Calu3 (cell line): ENCODE measurements at regions of chr17 and their contacts with region 1.

Region 1: GRCh38 chr17:38982858-38983746 is 15.9 kb upstream of the FBXO47 start:
- DNase-seq: peak; percentile 85
- H3K4me3 Mint-ChIP-seq: no peak overlapping the region
- H3K27ac Mint-ChIP-seq: no peak overlapping the region
- H3K4me1 Mint-ChIP-seq: no peaks in the 10 kb centered on the region
- H3K27me3 Mint-ChIP-seq: peaks cover 44% of the 10 kb centered on the region
- CTCF ChIP-seq: peak; percentile 98

Region 2: GRCh38 chr17:37047631-37048104 is 1935.4 kb before region 1 on chr17:
- CTCF ChIA-PET with region 1: interaction called, 104 read pairs
- intact Hi-C with region 1: loop called (anchors 1 kb)
- DNase-seq: peak; percentile 95
- H3K4me3 Mint-ChIP-seq: no peak overlapping the region
- H3K27ac Mint-ChIP-seq: no peak overlapping the region
- H3K4me1 Mint-ChIP-seq: peaks cover 7% of the 10 kb centered on the region
- H3K27me3 Mint-ChIP-seq: no peaks in the 10 kb centered on the region
- CTCF ChIP-seq: peak; percentile 100

Region 3: DNA sequence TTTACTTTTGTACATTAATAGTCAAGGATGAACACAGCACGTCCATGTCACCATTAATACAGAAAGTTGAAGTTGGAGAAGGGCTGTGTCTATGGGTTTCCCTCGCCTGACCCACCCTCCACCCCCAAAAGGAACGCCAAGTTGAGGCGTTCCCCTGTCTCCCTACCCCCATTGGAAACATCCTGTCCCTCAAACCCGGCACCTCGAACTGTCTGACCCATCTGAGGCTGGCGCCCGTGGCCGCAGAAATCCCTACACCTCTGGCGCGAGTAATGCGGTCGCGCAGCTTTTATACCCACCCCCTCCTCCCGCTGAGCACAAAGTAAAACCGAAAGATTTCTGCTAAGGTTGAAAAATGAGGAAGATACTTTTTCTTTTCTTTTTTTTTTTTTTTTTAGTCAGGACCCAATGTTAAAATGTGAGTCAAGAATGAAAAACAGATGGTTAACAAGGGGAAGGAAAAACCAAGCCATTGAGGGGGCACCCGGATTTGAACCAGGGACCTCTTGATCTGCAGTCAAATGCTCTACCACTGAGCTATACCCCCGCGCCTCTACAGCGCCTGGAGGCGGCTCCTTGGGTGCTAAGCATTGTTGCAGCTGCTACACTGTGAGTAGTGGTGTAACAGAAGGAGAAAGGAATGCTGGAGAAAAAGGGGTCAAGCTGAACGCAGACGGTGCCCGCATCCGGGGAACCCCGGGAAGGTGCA is 114.1 kb before region 1 on chr17:
- CTCF ChIA-PET with region 1: interaction called, 30 read pairs
- intact Hi-C with region 1: no loop called
- DNase-seq: peak; percentile 100
- H3K4me3 Mint-ChIP-seq: peak overlapping the region; percentile 95
- H3K27ac Mint-ChIP-seq: peak overlapping the region; percentile 97
- H3K4me1 Mint-ChIP-seq: peaks cover 51% of the 10 kb centered on the region
- H3K27me3 Mint-ChIP-seq: no peaks in the 10 kb centered on the region
- CTCF ChIP-seq: no peak

Region 4: DNA sequence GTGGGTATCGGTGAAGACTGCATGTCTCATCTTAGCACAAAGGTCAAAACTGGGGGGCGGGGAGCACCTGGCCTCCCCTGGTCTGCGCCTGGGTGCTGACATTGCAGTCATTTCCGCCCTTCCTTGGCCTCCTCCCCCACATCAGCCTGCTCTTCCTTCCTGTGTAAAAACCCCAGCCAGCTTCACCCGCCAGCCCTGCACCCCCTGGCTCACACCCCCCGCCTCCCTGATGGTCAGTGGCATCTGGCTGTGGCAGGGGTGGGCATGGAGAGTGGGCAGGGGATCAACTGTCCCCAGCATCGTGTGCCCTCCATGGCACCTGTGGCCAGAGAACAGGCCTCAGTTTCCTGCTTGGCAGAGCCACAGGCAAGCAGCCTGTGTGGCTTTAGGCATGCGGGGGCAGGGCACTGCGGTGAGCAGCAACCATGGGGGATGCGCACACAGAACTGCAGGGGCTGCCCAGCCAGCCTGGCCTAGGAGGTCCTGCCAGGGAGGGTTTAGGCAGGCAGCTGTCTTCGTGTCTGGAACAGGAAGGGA is 84.2 kb before region 1 on chr17:
- CTCF ChIA-PET with region 1: no interaction called
- intact Hi-C with region 1: no loop called
- DNase-seq: no peak
- H3K4me3 Mint-ChIP-seq: no peak overlapping the region
- H3K27ac Mint-ChIP-seq: no peak overlapping the region
- H3K4me1 Mint-ChIP-seq: peaks cover 24% of the 10 kb centered on the region
- H3K27me3 Mint-ChIP-seq: no peaks in the 10 kb centered on the region
- CTCF ChIP-seq: no peak

Region 5: GRCh38 chr17:39014044-39014794 is 31.1 kb after region 1 on chr17:
- CTCF ChIA-PET with region 1: interaction called, 17 read pairs
- intact Hi-C with region 1: no loop called
- DNase-seq: peak; percentile 49
- H3K4me3 Mint-ChIP-seq: no peak overlapping the region
- H3K27ac Mint-ChIP-seq: peak overlapping the region; percentile 0
- H3K4me1 Mint-ChIP-seq: peaks cover 26% of the 10 kb centered on the region
- H3K27me3 Mint-ChIP-seq: peaks cover 11% of the 10 kb centered on the region
- CTCF ChIP-seq: no peak

Region 6: DNA sequence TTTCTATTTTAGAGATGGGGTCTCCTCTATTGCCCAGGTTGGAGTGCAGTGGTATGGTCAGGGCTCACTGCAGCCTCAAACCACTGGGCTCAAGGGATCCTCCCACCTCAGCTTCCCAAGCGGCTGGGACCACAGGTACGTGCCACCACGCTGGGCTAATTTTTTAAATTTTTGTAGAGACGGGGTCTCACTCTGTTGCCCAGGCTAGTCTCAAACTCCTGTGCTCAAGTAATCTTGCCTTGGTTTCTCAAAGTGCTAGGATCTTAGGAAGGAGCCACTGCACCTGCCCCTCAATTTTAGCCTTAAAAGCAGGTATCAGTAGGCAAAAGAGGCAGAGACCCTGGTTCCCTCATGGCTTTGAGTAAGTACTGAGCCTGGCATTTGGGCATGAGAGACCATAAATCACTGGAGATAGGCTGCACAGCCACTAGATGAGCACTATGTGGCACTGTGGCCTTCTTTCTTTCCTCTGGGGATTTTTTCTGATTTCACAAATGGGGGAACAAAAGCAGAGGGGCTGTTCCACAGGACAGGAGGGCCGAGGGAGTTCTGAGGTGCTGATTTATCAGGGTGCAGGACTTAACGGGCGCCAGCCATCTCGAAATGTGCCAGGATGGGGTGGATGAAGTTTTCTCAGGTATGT is 86.1 kb after region 1 on chr17:
- CTCF ChIA-PET with region 1: interaction called, 13 read pairs
- intact Hi-C with region 1: no loop called
- DNase-seq: peak; percentile 67
- H3K4me3 Mint-ChIP-seq: no peak overlapping the region
- H3K27ac Mint-ChIP-seq: no peak overlapping the region
- H3K4me1 Mint-ChIP-seq: peaks cover 7% of the 10 kb centered on the region
- H3K27me3 Mint-ChIP-seq: peaks cover 89% of the 10 kb centered on the region
- CTCF ChIP-seq: peak; percentile 92

Region 7: DNA sequence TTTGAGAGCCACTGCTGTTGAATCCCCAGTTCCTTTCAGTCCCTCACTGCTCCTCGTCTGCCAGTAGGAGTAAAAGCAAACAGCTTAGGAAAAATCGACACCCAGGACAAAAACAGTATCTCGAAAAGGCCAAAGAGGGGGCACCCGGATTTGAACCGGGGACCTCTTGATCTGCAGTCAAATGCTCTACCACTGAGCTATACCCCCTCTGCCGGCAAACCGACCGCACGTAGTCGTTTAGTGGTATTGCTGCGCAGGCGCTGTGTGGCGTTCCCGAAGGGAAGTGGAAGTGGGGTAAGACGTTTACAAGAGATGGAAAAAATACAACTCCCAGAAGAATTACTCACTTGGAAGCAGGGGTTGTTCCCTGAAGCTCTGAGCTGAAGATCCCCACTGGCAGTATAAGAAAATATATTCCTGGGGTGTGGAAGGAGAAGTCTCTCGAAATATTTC is 170.5 kb after region 1 on chr17:
- CTCF ChIA-PET with region 1: interaction called, 502 read pairs
- intact Hi-C with region 1: loop called (anchors 1 kb)
- DNase-seq: peak; percentile 100
- H3K4me3 Mint-ChIP-seq: peak overlapping the region; percentile 95
- H3K27ac Mint-ChIP-seq: peak overlapping the region; percentile 99
- H3K4me1 Mint-ChIP-seq: peaks cover 29% of the 10 kb centered on the region
- H3K27me3 Mint-ChIP-seq: peaks cover 89% of the 10 kb centered on the region
- CTCF ChIP-seq: peak; percentile 28

Region 8: DNA sequence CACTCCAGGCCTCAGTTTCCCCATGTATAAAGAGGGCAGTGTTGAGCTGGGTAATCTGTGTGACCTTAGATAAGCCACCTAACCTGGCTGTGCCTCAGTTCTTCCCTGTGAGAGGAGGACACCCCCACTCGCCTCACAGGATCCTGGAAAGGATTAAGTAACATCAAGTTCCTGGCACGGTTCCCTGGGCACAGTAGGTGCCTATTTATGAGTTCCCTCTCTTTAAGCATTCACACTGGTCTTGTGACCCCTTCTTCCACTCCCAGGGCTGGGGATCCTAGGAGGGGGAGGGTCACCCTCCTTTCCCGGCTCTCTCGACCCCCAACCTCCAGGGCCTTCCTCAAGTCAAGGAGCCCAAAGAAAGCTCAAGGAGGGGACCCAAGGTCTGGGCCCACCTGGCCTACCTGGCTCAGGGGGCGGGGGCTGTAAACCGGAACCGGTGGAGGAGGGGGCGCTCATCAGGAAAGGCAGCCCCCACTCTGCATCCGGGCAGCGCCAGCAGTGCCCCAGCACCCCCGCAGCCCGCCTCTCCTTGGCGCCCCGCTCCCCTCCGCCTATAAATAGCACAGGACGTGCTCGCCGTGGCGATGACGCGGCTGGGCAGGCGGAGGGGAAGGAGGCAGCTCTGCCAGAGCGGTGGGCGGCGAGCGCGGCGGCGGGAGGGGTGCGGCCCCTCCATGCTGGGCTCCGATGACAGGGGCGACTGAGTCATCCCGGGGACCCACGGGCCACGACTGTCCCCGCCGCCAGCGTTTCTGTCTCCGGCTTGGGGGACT is 226.4 kb after region 1 on chr17:
- CTCF ChIA-PET with region 1: interaction called, 10 read pairs
- intact Hi-C with region 1: no loop called
- DNase-seq: peak; percentile 81
- H3K4me3 Mint-ChIP-seq: peak overlapping the region; percentile 55
- H3K27ac Mint-ChIP-seq: peak overlapping the region; percentile 16
- H3K4me1 Mint-ChIP-seq: peaks cover 43% of the 10 kb centered on the region
- H3K27me3 Mint-ChIP-seq: peaks cover 63% of the 10 kb centered on the region
- CTCF ChIP-seq: peak; percentile 13